ENCODE measurements at regions of chrX and their contacts with region 1.

Region 1: DNA sequence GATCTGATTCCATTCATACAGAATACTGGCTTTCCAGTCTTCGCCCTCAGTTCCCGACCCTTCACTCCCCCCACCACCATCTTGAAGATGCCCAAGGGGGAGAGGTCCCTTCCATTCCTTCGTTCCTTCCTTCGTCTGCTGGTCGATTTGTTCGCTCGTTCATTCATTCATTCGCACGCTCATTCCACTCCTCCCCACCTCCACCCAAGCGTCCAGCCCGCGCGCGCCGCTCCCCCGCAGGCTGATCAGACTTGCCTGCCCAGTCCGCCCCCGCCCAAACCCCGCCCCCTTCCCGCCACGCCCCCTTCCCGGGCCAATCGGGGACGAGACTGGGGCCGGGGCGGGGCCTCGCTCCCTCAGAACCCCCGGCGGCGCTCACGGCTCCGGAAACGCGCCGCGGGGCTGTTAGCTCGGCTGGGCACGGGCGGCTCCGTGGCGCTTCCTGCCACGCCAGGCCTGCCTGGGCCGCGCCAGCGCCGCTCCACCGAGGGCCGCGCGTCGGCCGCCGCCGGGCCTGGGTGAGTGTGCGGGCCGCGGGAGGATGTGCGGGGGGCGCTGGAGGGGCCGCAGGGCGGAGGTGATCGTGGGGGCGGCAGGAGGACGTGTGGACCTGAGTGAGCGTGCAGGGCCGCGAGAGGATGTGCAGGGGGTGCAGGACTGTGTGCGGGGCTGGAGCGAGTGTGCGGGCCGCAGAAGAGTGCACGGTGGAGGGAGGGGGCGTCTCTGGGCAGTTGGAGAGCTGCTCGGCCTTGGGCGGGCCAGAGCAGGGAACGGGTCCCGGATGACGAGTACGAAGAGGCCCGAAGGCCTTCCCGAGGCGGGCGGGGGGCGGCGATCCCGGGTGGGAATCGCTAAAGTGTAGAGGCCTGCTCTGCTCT is at the start of gene ZNF275:
- DNase-seq: peak; percentile 78
- H3K4me3 Mint-ChIP-seq: peak within 1 kb of the TSS; percentile 86
- H3K27ac Mint-ChIP-seq: peak within 1 kb of the TSS; percentile 90
- H3K4me1 Mint-ChIP-seq: peaks cover 49% of the 10 kb centered on the region
- H3K27me3 Mint-ChIP-seq: peaks cover 4% of the 10 kb centered on the region
- total RNA-seq, gene ZNF275: 22.1 and 22.5 TPM in 2 replicates

Region 2: DNA sequence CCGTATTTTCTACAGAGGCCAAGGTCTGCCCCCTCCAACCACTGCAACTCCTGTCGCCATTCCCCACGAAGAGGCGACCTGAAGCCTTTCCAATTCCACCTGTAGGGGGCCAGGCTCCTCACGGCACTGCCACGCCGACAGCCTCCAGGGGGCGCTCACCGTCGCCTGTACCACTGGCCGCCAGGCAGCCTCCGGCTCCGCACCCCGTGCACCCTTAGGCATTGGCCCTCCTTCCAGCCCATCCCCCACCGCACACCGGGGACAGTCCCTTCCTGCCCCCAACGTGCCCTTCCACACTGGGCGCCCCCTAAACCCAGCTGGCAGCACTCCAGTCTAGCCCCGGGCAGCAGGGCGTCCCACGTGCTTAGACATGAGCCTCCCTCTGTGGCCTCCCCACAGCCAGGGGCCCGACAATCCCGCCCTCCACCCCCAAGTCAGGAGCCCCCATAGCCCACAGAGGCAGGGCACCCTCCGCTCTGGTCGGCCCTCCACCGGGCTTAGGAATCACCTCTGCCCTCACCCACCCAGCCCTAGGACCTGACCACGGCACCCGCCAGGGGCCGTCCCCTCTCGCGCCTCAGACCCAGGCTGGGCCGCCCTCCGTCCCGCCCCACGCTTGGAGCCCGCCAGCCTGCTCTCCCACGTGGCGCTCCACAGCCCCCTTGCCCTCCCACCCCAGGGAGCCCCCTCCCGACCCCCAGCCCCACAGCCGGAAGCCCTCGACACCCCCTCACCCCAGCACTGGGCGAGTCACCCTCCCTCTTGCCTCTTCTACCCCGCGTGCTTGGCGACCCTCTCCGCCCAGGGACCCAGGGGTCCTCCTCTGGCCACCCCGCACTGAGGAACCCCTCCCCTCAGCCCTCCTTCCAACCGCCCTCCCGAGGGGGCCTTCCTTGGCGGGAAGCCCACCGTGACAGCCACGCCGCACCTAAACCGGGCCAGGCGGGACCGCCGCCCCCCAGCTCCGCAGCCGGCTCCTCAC is 66.4 kb after region 1 on chrX:
- intact Hi-C with region 1: loop called (anchors 5 kb)
- DNase-seq: peak; percentile 29
- H3K4me3 Mint-ChIP-seq: no peak overlapping the region
- H3K27ac Mint-ChIP-seq: no peak overlapping the region
- H3K4me1 Mint-ChIP-seq: peaks cover 7% of the 10 kb centered on the region
- H3K27me3 Mint-ChIP-seq: peaks cover 4% of the 10 kb centered on the region

Region 3: GRCh38 chrX:153411255-153411987 is 77.4 kb after region 1 on chrX and contains the start of gene ZFP92:
- intact Hi-C with region 1: loop called (anchors 2 kb)
- DNase-seq: peak; percentile 22
- H3K4me3 Mint-ChIP-seq: peak within 1 kb of the TSS; percentile 77
- H3K27ac Mint-ChIP-seq: peak within 1 kb of the TSS; percentile 44
- H3K4me1 Mint-ChIP-seq: no peaks in the 10 kb centered on the region
- H3K27me3 Mint-ChIP-seq: peaks cover 4% of the 10 kb centered on the region
- total RNA-seq, gene ZFP92: 2.4 and 2.5 TPM in 2 replicates

Region 4: DNA sequence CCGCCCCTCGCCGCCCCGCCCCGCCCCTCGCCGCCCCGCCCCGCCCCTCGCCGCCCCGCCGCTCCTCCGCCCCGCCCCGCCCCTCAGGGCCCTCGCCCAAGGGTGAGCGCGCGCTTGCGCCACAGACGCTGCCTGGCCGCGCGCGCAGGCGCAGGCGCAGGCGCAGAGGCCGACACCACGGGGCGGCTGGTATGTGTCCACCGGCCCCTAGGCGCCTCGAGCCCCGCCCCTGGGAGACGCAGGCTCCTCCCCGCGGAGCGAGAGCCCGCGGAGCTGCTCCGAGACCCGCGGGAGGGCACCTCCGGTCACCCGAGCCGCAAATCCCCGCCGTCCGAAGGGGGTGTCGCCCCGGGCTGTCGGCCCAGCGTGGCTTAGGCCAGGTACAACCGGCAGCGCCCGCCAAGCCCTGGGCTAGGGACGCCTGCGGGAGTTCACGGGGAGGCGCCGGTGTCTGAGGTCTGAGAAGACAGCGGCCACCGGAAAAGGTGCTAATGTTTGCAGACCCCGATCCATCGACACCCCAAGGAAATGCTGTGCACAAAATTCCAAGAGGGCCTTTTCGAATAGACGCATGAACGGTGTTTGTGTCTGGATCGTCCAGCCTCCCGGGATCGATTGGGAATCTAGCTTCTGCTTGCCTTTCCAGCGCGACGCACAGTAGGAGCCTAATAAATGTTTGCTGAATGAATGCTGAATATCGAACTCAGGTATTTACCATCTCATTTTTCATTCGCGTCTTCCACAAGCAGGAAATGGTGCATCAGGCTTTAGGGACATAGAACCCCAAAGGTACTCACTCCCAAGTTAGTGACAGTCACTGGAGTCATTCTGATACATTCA is 265.4 kb after region 1 on chrX:
- intact Hi-C with region 1: loop called (anchors 2 kb)
- DNase-seq: peak; percentile 87
- H3K4me3 Mint-ChIP-seq: peak overlapping the region; percentile 89
- H3K27ac Mint-ChIP-seq: peak overlapping the region; percentile 59
- H3K4me1 Mint-ChIP-seq: peaks cover 30% of the 10 kb centered on the region
- H3K27me3 Mint-ChIP-seq: peaks cover 1% of the 10 kb centered on the region